Heart right ventricle (tissue), 16 donors: ENCODE measurements at regions of chr12 and their contacts with region 1.

Region 1: GRCh38 chr12:10721651-10722501 is 1.2 kb downstream of the YBX3 start:
- DNase-seq: peak; percentile 82 to 94
- ATAC-seq: peak; percentile 86 to 96 (median 92)
- H3K4me3 ChIP-seq: peak overlapping the region; percentile 73 to 95 (median 92)
- H3K27ac ChIP-seq: peak overlapping the region; percentile 93 to 100 (median 98)
- H3K4me1 ChIP-seq: peaks cover 16 to 57% (median 54%) of the 10 kb centered on the region in 9 donors
- H3K27me3 ChIP-seq: peaks cover 0 to 18% (median 0%) of the 10 kb centered on the region in 7 donors
- CTCF ChIP-seq: no peak

Region 2: DNA sequence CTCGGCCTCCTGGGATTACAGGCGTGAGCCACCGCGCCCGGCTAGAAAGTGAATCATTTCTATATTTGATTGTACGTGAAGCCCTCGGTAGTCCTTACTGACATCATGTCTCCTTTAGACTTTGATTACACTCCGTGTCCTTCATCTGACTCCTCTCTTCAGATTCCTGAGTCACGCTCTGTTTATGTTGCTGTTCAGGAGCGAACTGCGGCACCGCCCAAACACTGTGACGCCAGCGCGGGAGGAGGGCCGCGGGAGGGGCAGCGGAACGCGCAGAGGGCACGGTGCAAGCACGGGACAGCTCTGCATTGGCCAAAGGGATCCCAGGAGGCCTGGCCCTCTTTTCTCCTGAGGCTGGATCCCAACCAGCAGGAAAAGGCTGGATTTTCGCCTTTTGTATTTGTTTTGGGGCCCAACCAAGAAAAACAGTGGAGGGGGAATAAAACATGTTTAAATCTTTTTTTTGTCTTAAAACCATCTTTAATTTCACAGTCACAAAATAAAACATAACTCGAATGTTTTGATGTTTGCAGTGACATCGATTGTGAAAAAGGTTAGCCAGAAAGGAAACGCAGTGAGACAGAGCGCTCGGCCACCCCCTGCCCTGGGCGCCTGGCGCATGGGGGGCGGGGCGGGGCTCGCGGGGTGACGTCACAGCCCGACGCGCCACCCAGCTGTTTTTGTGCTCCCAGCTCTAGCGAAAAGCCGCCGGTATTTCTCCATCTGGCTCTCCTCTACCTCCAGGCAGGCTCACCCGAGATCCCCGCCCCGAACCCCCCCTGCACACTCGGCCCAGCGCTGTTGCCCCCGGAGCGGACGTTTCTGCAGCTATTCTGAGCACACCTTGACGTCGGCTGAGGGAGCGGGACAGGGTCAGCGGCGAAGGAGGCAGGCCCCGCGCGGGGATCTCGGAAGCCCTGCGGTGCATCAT is 509.4 kb before region 1 on chr12 and contains the start of gene GABARAPL1:
- intact Hi-C with region 1: loop called in 5 of 10 experiments (anchors 2 to 10 kb)
- DNase-seq: peak; percentile 97 to 98
- ATAC-seq: peak; percentile 92 to 98 (median 94)
- H3K4me3 ChIP-seq: peak within 1 kb of the TSS; percentile 64 to 93 (median 83)
- H3K27ac ChIP-seq: peak within 1 kb of the TSS; percentile 95 to 100 (median 99)
- H3K4me1 ChIP-seq: peaks cover 0 to 41% (median 26%) of the 10 kb centered on the region in 9 donors
- H3K27me3 ChIP-seq: no peaks in the 10 kb centered on the region
- CTCF ChIP-seq: peak in 1 of 9 donors; percentile 9
- total RNA-seq, gene GABARAPL1: 285 to 512 (median 413) TPM

Region 3: DNA sequence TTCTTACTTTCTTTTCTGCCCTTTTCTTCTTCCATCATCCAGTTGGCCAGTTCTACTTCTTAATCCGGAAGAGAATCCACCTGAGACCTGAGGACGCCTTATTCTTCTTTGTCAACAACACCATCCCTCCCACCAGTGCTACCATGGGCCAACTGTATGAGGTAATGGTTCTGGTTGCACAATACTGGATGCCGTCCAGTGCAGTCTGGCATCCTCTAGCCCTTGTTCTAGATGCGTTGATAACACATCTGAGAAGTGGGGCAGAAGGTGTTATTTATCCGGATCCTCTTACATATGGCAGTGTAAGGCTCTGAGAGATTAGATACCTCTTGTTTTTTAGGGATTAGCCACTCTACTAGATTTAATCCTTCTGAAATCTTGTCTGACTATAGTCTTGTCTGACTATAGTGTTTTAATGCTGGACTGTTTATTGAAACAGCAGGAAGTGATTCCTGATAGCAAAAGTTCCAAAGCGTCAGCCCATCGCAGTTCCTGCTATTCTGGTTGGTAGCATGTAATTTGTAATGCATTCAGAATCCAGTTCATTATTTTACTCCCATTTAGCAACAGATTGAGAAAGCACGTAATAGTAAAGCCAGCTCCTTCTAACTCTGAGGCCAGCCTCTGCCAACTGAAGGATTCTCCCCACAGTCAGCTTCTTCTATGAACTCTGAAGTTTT is 501.3 kb before region 1 on chr12:
- intact Hi-C with region 1: loop called in 2 of 10 experiments (anchors 10 kb)
- DNase-seq: peak; percentile 67 to 83
- ATAC-seq: peak; percentile 86 to 96 (median 94)
- H3K4me3 ChIP-seq: peak overlapping the region in 1 of 10 donors; percentile 6
- H3K27ac ChIP-seq: peak overlapping the region; percentile 31 to 100 (median 68)
- H3K4me1 ChIP-seq: peaks cover 5 to 62% (median 43%) of the 10 kb centered on the region in 9 donors
- H3K27me3 ChIP-seq: no peaks in the 10 kb centered on the region
- CTCF ChIP-seq: no peak

Region 4: DNA sequence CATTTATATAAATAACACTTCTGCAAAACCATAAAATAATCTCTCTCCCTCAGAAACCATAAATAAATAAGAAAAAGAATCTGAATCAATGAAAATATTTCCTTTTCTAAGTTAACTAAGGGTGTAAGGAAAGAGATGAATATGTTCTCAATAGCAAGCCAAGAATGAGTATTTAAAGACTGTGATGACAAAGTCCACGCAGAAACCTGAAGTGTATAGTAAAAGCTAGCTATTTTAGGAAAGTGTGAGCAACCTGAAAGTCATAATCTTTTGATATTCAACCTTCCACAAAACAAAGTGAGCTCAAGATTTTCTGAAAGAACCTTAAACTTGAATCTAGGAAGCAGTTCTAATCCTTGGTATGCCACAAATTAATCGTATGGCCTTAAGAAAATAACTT is 200.3 kb before region 1 on chr12:
- intact Hi-C with region 1: no loop called
- DNase-seq: no peak
- ATAC-seq: no peak
- H3K4me3 ChIP-seq: no peak overlapping the region
- H3K27ac ChIP-seq: no peak overlapping the region
- H3K4me1 ChIP-seq: no peaks in the 10 kb centered on the region
- H3K27me3 ChIP-seq: no peaks in the 10 kb centered on the region
- CTCF ChIP-seq: no peak

Region 5: DNA sequence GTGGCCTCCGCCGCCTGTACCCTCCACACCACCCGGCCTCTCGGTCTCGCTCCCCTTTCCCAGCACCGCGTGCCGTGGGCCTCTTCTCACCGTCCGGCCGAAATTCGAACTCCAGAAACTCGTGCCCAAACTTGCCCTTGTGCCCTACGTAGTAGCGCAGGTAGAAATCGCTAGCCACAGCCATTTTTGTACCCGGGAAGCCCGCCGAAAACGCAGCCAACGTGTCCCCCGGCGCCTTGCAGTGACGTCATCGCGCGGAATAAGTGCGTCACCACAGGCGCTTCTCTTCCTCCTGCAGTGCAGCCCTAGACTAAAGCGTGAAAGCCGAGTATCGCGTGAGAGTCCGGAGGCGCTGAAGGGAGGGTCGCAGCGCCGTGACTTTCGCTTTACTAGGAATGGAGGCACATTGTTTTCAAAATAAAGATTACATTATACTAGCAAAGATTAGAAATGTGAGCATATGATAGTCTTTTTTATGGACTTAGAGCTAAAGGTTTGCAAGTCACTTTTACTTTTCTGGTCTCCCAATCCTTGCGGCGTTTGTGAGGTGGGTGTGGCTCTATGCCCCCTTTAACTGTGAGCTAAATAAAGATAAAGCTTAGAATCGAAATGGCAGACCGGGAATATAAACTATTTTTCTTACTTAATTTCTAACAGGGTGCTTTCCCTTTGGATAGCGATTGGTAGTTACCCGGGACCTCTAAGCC is 108.4 kb before region 1 on chr12 and contains the start of gene MAGOHB:
- intact Hi-C with region 1: loop called in 4 of 10 experiments (anchors 5 to 10 kb)
- DNase-seq: peak; percentile 97
- ATAC-seq: peak; percentile 99 to 100 (median 99)
- H3K4me3 ChIP-seq: peak within 1 kb of the TSS; percentile 62 to 97 (median 83)
- H3K27ac ChIP-seq: peak within 1 kb of the TSS; percentile 11 to 95 (median 87)
- H3K4me1 ChIP-seq: peaks cover 0 to 24% (median 14%) of the 10 kb centered on the region in 9 donors
- H3K27me3 ChIP-seq: peaks cover 0 to 5% (median 0%) of the 10 kb centered on the region in 7 donors
- CTCF ChIP-seq: no peak
- total RNA-seq, gene MAGOHB: 10.9 to 17.1 (median 13.4) TPM